Activated CD4-positive, alpha-beta memory T cell treated with anti-CD3 and anti-CD28 coated beads for 36 hours (primary cell): ENCODE measurements at regions of chr9 and their contacts with region 1.

Region 1: DNA sequence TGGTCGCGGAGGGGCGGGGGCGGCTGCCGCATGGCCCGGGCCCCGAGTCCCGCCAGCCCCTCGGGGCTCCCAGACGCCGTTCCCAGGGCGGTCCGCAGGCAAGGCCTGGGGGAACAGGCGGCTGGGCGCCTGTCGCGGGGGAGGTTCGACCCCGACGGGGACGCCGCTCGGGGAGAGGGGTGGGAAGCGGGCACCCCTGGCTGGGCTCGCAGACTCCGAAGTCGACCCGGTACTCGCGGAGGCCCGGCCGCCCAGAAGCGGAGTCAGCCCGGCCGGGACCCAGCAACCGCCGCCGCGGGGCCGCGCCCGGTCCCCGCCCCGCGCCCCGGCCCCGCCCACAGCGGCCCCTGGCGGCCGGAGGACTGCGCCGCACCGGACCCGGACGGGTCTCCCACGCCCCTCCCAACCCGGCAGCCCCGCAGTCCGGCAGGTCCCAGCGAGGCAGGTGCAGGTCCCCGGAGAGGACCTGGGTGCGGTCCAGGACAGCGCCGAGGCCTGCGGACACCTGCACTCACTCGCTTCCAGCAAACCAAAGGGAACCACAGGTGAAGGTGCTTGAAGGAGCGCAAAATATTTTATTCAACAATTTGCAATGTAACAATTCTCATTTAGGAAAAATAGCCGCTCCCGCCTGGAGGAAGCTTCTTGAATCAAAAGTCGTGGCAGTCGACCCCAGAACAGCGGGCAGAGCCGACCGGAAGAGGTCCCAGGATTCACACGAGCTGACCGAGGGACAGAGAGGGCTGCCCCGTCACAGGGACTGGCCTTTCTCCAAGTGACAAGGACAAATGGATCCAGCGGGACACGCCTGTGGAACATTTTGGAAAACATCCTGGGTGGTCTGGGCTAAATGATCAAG is at the start of gene INPP5E:
- DNase-seq: peak; percentile 84
- H3K4me3 Mint-ChIP-seq: peak within 1 kb of the TSS; percentile 88
- H3K27ac Mint-ChIP-seq: peak within 1 kb of the TSS; percentile 23
- H3K4me1 Mint-ChIP-seq: peaks cover 23% of the 10 kb centered on the region
- H3K27me3 Mint-ChIP-seq: no peaks in the 10 kb centered on the region
- total RNA-seq, gene INPP5E: 18.8 to 21.3 TPM

Region 2: GRCh38 chr9:136118320-136119060 is 321.3 kb before region 1 on chr9 and contains the start of gene TMEM250:
- CTCF ChIA-PET with region 1: no interaction called
- POLR2A ChIA-PET with region 1: no interaction called
- intact Hi-C with region 1: no loop called
- DNase-seq: peak; percentile 97
- H3K4me3 Mint-ChIP-seq: peak within 1 kb of the TSS; percentile 84
- H3K27ac Mint-ChIP-seq: peak within 1 kb of the TSS; percentile 87
- H3K4me1 Mint-ChIP-seq: peaks cover 30% of the 10 kb centered on the region
- H3K27me3 Mint-ChIP-seq: no peaks in the 10 kb centered on the region
- total RNA-seq, gene TMEM250: 28.0 to 28.4 TPM

Region 3: DNA sequence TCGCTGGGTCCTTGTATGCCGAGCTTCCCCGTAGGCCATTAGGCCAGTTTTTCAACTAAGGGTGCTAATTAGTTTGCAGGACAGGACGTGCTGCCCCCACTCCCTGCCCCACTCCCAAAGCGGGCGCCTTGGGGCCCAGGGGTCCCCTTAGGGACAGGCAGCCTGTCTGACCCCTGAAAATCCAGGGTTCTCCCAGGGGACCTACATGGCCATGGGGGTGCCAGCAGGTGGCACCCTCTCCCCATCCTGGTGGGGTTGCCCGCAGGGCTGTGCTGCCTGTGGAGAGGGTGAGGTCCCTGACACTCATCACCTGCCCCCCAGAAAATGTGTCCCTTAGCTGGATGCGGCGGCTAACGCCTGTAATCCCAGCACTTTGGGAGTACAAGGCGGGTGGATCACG is 127.3 kb before region 1 on chr9:
- CTCF ChIA-PET with region 1: no interaction called
- POLR2A ChIA-PET with region 1: no interaction called
- intact Hi-C with region 1: no loop called
- DNase-seq: peak; percentile 60
- H3K4me3 Mint-ChIP-seq: no peak overlapping the region
- H3K27ac Mint-ChIP-seq: no peak overlapping the region
- H3K4me1 Mint-ChIP-seq: no peaks in the 10 kb centered on the region
- H3K27me3 Mint-ChIP-seq: no peaks in the 10 kb centered on the region

Region 4: GRCh38 chr9:136385015-136385414 is 54.8 kb before region 1 on chr9:
- CTCF ChIA-PET with region 1: no interaction called
- POLR2A ChIA-PET with region 1: no interaction called
- intact Hi-C with region 1: no loop called
- DNase-seq: no peak
- H3K4me3 Mint-ChIP-seq: no peak overlapping the region
- H3K27ac Mint-ChIP-seq: no peak overlapping the region
- H3K4me1 Mint-ChIP-seq: peaks cover 2% of the 10 kb centered on the region
- H3K27me3 Mint-ChIP-seq: no peaks in the 10 kb centered on the region

Region 5: DNA sequence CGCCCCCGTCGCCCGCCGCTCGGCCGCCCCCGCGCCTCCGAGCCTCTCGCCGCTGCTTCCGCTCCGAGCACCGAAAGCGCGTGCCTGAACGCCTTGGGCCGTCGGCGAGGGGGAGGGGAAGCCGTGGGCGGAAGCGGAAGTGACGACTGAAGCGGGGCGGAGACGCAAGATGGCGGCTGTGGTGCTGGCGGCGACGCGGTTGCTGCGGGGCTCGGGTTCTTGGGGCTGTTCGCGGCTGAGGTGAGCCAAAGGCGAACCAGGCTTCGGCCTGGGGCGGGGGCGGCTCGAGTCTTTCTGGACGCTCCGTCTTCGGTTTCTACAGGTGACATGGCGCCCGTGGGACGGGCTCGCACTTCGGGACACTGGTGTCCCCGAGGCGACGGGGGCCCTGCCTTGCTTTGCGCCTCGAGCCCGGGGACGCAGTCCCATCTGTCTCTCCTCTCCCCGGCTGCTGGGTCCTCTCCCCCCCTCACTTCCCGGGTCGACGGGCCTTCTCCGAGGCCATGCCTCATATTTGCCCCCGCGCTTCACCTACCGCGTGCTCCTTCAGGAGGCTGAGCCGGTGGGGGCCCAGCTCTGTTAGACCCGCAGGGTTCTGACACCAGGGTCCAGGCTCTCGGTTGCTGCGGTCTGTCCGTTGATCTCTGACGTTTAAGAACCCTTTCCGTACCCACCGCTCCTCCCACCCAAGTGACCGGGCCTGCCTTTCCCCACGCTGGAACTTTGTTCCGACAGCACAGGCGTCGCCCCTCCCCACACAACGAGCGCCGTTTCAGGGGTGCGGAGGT is 29.1 kb before region 1 on chr9 and contains the starts of genes ENTR1 and PMPCA:
- CTCF ChIA-PET with region 1: no interaction called
- POLR2A ChIA-PET with region 1: interaction called, 4 read pairs
- intact Hi-C with region 1: loop called (anchors 1 kb)
- DNase-seq: peak; percentile 97
- H3K4me3 Mint-ChIP-seq: peak within 1 kb of the TSS; percentile 91
- H3K27ac Mint-ChIP-seq: peak within 1 kb of the TSS; percentile 94
- H3K4me1 Mint-ChIP-seq: peaks cover 55% of the 10 kb centered on the region
- H3K27me3 Mint-ChIP-seq: no peaks in the 10 kb centered on the region
- total RNA-seq, gene ENTR1: 66.9 to 74.9 TPM
- total RNA-seq, gene PMPCA: 108 to 112 TPM

Region 6: GRCh38 chr9:136460772-136461312 is 21.1 kb after region 1 on chr9:
- CTCF ChIA-PET with region 1: no interaction called
- POLR2A ChIA-PET with region 1: no interaction called
- intact Hi-C with region 1: no loop called
- DNase-seq: no peak
- H3K4me3 Mint-ChIP-seq: no peak overlapping the region
- H3K27ac Mint-ChIP-seq: no peak overlapping the region
- H3K4me1 Mint-ChIP-seq: no peaks in the 10 kb centered on the region
- H3K27me3 Mint-ChIP-seq: no peaks in the 10 kb centered on the region